Mammary epithelial cell (primary cell): ENCODE measurements at regions of chr19 and their contacts with region 1.

Region 1: DNA sequence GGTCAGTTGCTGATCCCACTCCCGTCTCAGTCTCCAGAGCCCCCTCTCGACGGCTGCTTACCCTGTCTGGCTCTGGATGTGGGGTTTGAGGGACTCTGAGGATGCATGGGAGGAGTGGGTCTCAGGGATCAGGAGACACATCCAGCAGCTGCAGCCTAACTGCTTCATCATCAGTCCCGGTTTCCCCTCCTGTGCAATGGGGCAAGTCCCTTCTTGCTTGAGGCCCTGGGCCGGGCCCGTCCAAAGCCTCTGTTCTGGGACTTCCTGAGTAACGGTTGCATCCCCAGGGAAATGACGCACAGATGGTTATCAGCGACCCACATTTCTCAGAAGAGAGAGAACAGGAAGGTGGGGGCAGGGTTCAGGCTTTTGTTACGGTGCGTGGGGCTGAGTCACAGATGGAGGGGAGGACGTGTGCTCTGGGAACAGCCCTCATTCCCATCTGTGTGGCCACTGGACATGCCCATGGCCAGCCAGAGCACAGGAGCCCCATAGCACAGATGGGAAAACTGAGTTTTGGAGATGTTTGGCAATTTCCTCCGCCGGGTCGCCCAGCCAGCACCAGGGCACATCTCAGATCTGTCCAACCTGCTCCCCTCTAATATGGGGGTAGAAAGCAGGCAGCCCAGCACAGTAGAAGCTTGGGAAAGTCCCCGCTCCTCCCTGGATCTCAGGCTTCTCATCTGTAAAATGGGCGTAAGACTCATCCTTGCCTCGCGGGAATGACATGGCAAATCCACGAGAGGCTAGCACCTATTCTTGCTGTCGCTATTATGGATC is 19.3 kb downstream of the GNA15 start:
- DNase-seq: peak; percentile 100
- H3K4me3 ChIP-seq: peak overlapping the region in 1 of 3 experiments; percentile 22
- H3K27ac ChIP-seq: peak overlapping the region; percentile 96
- H3K4me1 ChIP-seq: peaks cover 31% of the 10 kb centered on the region
- H3K27me3 ChIP-seq: no peaks in the 10 kb centered on the region
- CTCF ChIP-seq: no peak

Region 2: DNA sequence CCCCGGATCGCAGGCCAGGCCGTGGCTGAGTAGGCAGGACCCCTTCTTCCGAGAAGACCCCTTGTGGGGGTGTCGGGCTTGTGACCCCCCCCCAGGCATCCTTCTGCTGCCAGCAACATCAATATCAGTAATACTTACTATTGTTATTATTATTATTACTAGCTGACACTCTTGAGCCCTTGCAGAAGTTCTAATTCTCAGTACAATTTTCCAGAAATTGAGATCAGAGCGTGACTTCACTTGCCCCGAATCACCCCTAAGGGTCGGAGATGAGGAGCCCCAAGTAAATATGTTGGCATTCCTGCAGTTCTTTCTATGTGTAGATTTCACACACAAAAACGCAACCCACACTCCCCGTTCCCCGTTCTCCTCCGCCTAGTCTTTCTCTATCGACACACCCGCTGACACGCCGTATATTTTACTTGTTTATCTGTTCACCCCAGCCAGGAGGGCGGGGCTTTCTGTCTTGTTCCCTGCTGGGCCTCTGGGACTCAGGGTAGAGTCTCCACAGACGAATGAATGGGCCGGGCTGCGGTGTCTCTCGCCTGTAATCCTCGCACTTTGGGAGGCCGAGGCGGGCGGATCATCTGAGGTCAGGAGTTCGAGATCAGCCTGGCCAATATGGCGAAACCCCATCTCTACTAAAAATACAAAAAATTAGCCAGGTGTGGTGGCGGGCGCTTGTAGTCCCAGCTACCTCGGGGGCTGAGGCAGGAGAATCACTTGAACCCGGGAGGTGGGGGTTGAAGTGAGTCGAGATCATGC is 107.5 kb before region 1 on chr19:
- CTCF ChIA-PET with region 1: no interaction called
- dilution Hi-C with region 1: no loop called
- in situ Hi-C with region 1: no loop called
- intact Hi-C with region 1: no loop called
- DNase-seq: peak; percentile 42
- H3K4me3 ChIP-seq: peak overlapping the region in 1 of 3 experiments; percentile 18
- H3K27ac ChIP-seq: no peak overlapping the region
- H3K4me1 ChIP-seq: peaks cover under 1% of the 10 kb centered on the region
- H3K27me3 ChIP-seq: no peaks in the 10 kb centered on the region
- CTCF ChIP-seq: no peak

Region 3: DNA sequence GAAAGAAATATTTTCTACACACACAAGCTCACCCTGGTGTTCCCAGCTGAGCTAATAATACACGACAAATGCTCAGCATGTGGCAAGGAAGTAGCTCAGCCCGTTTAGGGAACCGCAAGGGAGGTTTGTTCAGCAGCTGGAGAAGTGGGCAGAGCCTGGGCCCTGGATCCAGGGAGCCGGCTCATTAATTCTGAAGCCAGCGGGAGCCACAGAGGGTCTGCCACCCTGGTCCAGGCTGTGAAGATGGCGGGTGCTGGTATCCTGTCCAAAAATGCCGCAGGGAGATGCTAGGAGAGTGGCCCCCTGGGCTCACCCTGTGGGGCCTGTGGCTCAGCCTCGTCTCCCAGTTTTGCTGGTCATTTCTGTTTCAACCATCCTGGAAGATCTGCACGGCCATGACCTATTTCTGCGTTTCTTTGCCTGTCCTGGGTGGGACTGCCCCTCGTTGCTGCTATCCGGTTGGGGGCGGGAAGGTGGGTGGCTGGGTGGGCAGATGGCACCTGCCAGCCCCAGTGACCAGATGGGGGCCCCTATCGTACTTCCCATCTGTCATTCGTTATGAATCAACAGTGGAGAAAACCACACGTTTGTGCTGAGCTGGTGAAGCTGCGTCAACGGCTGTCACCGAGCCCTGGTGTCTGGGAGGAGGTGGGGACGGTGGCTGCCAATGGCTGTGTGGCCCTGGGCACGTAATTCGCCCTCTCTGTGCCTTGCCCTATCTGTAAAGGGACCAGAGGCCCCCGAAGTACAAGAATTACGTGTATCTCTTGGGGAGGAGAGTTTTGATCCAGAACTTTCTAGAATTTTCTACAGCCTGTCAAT is 22.0 kb before region 1 on chr19:
- CTCF ChIA-PET with region 1: no interaction called
- dilution Hi-C with region 1: no loop called
- in situ Hi-C with region 1: no loop called
- intact Hi-C with region 1: loop called (anchors 2 kb)
- DNase-seq: no peak
- H3K4me3 ChIP-seq: no peak overlapping the region
- H3K27ac ChIP-seq: no peak overlapping the region
- H3K4me1 ChIP-seq: peaks cover 10% of the 10 kb centered on the region
- H3K27me3 ChIP-seq: no peaks in the 10 kb centered on the region
- CTCF ChIP-seq: no peak